Prostate gland (tissue), 2 donors: ENCODE measurements at regions of chr18 and their contacts with region 1.

Region 1: DNA sequence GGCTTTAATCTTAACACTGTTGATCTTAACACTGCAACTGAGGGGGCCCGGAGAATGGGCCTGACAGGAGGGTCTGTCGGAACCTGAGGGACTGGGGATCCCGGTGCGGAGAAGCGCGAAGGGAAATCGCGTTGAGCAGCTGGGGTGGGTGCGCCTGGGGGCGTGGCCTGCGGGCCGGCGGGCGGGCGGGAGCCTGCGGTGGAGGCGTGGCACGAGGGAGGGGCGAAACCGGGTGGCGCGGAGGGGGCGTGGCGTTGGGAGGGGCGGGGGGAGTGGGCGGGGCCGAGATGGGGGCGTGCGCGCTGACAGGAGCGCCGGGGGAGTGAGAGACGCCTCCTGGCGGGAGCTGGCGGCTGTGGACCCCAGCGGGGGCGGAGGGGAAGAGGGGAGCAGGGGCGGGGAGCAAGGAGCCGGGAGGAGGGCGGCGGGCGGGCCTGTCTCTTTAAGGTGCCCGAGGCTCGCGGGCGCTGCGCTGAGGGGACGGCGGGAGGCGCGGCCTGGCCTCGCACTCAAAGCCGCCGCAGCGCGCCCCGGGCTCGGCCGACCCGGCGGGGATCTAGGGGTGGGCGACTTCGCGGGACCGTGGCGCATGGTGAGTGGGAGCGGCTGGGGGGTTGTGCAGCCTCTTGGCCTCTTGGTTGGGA is at the start of gene TWSG1:
- DNase-seq: peak; percentile 92
- H3K4me3 ChIP-seq: peak within 1 kb of the TSS; percentile 84 to 88
- H3K27ac ChIP-seq: peak within 1 kb of the TSS; percentile 89 to 94
- H3K4me1 ChIP-seq: peaks cover 6% of the 10 kb centered on the region
- H3K27me3 ChIP-seq: no peaks in the 10 kb centered on the region
- CTCF ChIP-seq: peak; percentile 29 to 46 (median 32)
- POLR2A ChIP-seq: peak; percentile 75
- total RNA-seq, gene TWSG1: 32.2 to 46.0 TPM

Region 2: GRCh38 chr18:9066817-9067306 is 267.6 kb before region 1 on chr18:
- intact Hi-C with region 1: loop called (anchors 5 kb)
- DNase-seq: no peak
- H3K4me3 ChIP-seq: no peak overlapping the region
- H3K27ac ChIP-seq: no peak overlapping the region
- H3K4me1 ChIP-seq: no peaks in the 10 kb centered on the region
- H3K27me3 ChIP-seq: no peaks in the 10 kb centered on the region
- CTCF ChIP-seq: no peak
- POLR2A ChIP-seq: no peak

Region 3: GRCh38 chr18:9474983-9475642 is 140.7 kb after region 1 on chr18 and contains the start of gene RALBP1:
- intact Hi-C with region 1: loop called (anchors 5 kb)
- DNase-seq: peak; percentile 99
- H3K4me3 ChIP-seq: peak within 1 kb of the TSS; percentile 60 to 95
- H3K27ac ChIP-seq: peak within 1 kb of the TSS; percentile 95
- H3K4me1 ChIP-seq: no peaks in the 10 kb centered on the region
- H3K27me3 ChIP-seq: no peaks in the 10 kb centered on the region
- CTCF ChIP-seq: peak in 3 of 4 experiments; percentile 11 to 30 (median 30)
- POLR2A ChIP-seq: peak; percentile 92
- total RNA-seq, gene RALBP1: 58.2 to 64.8 TPM

Region 4: DNA sequence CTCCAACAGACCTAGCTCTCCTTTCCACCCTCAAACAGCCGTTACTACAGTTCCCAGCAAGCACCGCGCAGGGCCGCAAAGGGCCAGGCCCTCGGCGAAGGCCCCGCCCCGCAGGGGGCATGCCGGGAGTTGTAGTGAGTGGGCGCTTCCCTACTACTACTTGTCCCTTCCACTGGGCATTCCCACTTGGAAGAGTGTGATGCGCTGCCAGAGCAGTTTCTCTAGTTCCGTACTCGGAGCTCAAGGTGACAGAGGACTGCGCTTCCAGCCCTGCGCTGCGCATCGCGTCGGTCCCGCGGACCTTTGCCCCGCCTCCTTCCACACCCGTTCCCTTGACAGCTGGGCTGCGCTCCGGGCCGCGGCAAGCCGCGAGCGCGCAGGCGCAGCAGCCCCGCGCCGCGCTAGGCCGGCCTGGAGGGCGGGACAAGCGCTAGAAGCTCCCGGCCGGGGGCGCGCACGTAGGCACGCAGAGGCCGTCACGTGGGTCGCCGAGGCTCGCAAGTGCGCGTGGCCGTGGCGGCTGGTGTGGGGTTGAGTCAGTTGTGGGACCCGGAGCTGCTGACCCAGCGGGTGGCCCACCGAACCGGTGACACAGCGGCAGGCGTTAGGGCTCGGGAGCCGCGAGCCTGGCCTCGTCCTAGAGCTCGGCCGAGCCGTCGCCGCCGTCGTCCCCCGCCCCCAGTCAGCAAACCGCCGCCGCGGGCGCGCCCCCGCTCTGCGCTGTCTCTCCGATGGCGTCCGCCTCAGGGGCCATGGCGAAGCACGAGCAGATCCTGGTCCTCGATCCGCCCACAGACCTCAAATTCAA is 579.3 kb after region 1 on chr18 and contains the start of gene VAPA:
- intact Hi-C with region 1: loop called (anchors 10 kb)
- DNase-seq: peak; percentile 94
- H3K4me3 ChIP-seq: peak within 1 kb of the TSS; percentile 88 to 96
- H3K27ac ChIP-seq: peak within 1 kb of the TSS; percentile 99 to 100
- H3K4me1 ChIP-seq: peaks cover 5% of the 10 kb centered on the region
- H3K27me3 ChIP-seq: no peaks in the 10 kb centered on the region
- CTCF ChIP-seq: peak in 1 of 4 experiments; percentile 26
- POLR2A ChIP-seq: peak; percentile 96
- total RNA-seq, gene VAPA: 140 to 183 TPM